ENCODE measurements at regions of chr1 and their contacts with region 1.

Region 1: GRCh38 chr1:179002552-179003345 is 22.9 kb upstream of the FAM20B start:
- DNase-seq: peak; percentile 82 to 93
- H3K4me3 ChIP-seq: no peak overlapping the region
- H3K4me1 ChIP-seq: peaks cover 5% of the 10 kb centered on the region
- H3K27me3 ChIP-seq: no peaks in the 10 kb centered on the region

Region 2: GRCh38 chr1:178532392-178532791 is 470.4 kb before region 1 on chr1:
- in situ Hi-C with region 1: loop called (anchors 5 kb)
- DNase-seq: peak; percentile 68 to 90
- H3K4me3 ChIP-seq: no peak overlapping the region
- H3K4me1 ChIP-seq: peaks cover 6% of the 10 kb centered on the region
- H3K27me3 ChIP-seq: no peaks in the 10 kb centered on the region

Region 3: DNA sequence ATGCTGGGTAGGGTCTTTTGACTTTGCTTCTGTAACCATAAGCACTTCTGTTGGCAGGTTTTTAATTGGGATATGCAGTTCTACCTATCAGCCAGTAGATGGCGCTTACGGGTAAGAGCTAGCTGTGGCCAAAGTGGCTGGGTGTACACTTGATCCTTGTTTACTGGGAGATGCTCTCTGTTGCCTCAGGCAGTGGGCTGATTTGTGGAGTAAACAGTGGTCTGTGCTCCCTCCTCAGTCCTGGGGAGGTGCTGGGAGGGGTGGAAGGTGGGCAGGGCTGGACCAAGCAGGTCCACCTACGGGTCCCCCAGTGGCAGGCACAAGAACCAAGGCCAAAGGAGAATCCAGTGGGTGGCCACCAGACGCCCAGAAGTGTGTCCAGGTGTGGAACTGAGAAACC is 234.3 kb before region 1 on chr1:
- in situ Hi-C with region 1: loop called (anchors 5 kb)
- DNase-seq: peak; percentile 29 to 43
- H3K4me3 ChIP-seq: no peak overlapping the region
- H3K4me1 ChIP-seq: no peaks in the 10 kb centered on the region
- H3K27me3 ChIP-seq: no peaks in the 10 kb centered on the region

Region 4: GRCh38 chr1:179091691-179092165 is 89.0 kb after region 1 on chr1:
- in situ Hi-C with region 1: no loop called
- DNase-seq: no peak
- H3K4me3 ChIP-seq: no peak overlapping the region
- H3K4me1 ChIP-seq: no peaks in the 10 kb centered on the region
- H3K27me3 ChIP-seq: no peaks in the 10 kb centered on the region